PC-9 (cell line): ENCODE measurements at regions of chr20 and their contacts with region 1.

Region 1: DNA sequence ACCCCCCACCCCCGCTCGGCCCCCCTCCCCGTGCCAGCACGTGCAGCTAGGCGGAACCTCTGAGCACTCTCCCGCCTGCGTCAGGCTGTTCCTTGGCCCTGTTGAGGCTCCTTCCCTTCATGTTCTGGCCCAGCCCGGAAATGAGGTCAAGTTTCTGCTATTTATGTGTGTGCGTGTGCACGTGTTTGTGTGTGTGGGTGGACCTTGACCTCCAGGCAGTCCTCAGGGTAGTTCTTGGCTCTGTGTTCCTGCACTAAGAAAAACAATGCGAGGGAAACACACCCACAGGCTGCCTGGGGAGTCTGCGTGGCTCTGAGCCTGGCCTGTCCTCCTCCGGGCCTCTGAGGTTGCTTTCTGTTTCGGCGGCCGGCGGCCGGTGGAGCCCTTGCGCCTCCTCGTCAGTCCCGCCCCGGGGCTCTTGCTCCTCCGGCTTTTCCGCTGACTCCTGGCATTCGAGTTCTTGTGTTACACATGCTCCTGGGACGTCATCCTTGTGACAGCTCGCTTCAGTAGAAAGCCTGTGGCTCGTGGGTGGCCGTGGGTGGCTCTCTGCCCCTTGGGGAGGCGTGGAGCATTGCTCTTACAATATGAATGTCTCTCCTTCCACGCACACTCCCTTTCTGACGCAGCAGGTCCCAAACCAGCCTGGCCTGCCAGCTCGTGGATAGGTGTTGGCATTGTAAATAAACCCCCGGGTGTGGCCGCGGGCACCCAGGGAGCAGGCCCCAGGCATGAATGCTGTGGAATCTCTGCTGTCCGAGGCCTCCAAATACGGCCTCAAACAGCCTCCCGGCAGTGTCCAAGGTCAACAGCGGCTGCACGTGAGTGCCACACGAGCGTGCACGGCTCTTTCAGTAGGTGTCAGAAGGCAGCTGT is 10.0 kb downstream of the SLCO4A1 start:
- DNase-seq: peak; percentile 94
- H3K4me3 ChIP-seq: 0 out of 2 replicates have a peak overlapping the region, but pooled peaks have one; percentile 19
- H3K27ac ChIP-seq: peak overlapping the region; percentile 59
- H3K4me1 ChIP-seq: peaks cover 36% of the 10 kb centered on the region
- H3K27me3 ChIP-seq: no peaks in the 10 kb centered on the region
- CTCF ChIP-seq: no peak

Region 2: GRCh38 chr20:61896058-61896961 is 756.0 kb before region 1 on chr20:
- CTCF ChIA-PET with region 1: no interaction called
- POLR2A ChIA-PET with region 1: no interaction called
- intact Hi-C with region 1: no loop called
- DNase-seq: peak in 1 of 2 experiments; percentile 54
- H3K4me3 ChIP-seq: no peak overlapping the region
- H3K27ac ChIP-seq: no peak overlapping the region
- H3K4me1 ChIP-seq: no peaks in the 10 kb centered on the region
- H3K27me3 ChIP-seq: peaks cover 94% of the 10 kb centered on the region
- CTCF ChIP-seq: peak; percentile 83

Region 3: DNA sequence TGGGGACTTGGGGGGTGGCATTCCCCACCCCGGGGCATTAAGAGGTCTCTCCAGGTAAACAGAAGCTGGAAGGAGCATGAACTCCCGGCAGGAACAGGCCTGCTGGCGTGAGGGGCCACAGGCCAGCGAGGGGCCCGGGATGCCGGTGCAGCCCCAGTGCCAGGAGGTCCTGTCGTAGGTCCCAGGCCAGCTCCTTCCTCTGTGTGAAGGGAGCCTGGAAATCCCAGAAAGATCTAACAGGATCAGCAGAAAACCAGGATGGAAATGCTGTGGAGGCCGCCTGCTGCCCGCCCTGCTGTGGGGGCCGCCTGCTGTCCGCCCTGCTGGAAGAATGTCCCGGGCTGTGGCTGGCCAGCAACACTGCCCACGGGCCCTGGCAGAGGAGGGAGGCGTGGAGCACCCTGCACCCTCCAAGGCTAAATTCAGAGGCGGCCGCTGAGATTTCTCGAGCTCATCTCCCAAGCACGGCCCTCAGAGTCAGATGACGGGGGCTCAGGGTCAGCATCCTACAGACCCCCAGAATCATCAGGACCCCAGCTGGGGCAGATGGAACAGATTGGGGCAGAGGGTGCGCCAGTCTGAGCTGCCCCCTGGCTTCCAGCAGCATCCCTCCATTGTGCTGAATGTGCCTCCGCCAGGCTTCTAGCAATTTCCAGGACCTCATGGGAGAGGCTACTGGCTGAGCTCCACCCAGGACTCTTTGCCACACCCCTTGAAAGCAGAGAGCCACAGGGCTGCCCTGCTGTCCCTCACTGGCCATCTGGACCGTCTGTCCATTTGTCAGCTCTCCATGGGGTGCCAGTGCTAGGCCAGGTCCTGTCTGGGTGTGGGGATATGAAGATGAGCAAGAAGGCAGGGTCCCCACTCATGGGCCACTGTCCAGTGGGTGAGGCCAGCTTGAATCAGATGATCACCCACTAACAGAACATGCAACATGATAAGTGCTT is 42.2 kb before region 1 on chr20:
- CTCF ChIA-PET with region 1: no interaction called
- POLR2A ChIA-PET with region 1: no interaction called
- intact Hi-C with region 1: no loop called
- DNase-seq: no peak
- H3K4me3 ChIP-seq: no peak overlapping the region
- H3K27ac ChIP-seq: no peak overlapping the region
- H3K4me1 ChIP-seq: peaks cover 12% of the 10 kb centered on the region
- H3K27me3 ChIP-seq: peaks cover 24% of the 10 kb centered on the region
- CTCF ChIP-seq: no peak

Region 4: DNA sequence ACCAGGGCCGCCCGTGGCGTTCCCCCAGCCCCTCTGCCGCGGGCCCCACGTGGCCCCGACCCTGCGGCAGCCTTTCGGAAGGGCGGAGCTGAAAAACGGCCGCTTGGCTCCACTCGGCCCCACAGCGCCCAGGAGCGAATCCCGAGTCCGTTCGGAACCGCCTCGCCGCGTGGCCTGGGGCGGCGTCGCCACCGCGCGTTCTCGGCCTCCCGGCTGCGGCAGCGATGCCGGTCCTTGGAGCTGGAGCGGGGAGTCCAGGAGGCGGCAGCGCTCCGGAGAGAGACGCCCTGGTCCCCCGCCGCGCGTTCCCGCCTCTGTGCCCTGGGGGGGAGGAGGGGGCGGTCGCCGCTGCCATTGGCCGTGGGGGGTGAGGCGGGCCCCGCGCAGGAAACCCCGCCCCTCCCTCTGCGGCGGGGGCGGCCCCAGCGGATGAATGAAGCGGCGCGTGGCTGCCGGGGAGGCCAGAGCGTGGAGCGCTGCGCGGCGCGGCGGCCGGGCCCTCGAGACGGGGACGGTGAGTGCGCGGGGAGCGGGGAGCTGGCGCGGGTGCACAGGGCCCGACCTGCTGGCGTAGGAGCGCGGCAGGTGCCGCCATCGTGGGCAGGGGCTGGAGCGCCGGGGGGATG is 10.1 kb before region 1 on chr20 and contains the start of gene SLCO4A1:
- CTCF ChIA-PET with region 1: no interaction called
- POLR2A ChIA-PET with region 1: interaction called, 4 read pairs
- intact Hi-C with region 1: loop called (anchors 1 kb)
- DNase-seq: peak; percentile 68 to 91
- H3K4me3 ChIP-seq: peak within 1 kb of the TSS; percentile 97
- H3K27ac ChIP-seq: peak within 1 kb of the TSS; percentile 43
- H3K4me1 ChIP-seq: peaks cover 45% of the 10 kb centered on the region
- H3K27me3 ChIP-seq: no peaks in the 10 kb centered on the region
- CTCF ChIP-seq: no peak
- total RNA-seq, gene SLCO4A1: 14.1 and 19.3 TPM in 2 replicates

Region 5: GRCh38 chr20:62832212-62832922 is 180.1 kb after region 1 on chr20:
- CTCF ChIA-PET with region 1: no interaction called
- POLR2A ChIA-PET with region 1: no interaction called
- intact Hi-C with region 1: no loop called
- DNase-seq: peak in 1 of 2 experiments; percentile 32
- H3K4me3 ChIP-seq: no peak overlapping the region
- H3K27ac ChIP-seq: no peak overlapping the region
- H3K4me1 ChIP-seq: peaks cover 33% of the 10 kb centered on the region
- H3K27me3 ChIP-seq: no peaks in the 10 kb centered on the region
- CTCF ChIP-seq: no peak